ENCODE measurements at regions of chr1 and their contacts with region 1.

Region 1: DNA sequence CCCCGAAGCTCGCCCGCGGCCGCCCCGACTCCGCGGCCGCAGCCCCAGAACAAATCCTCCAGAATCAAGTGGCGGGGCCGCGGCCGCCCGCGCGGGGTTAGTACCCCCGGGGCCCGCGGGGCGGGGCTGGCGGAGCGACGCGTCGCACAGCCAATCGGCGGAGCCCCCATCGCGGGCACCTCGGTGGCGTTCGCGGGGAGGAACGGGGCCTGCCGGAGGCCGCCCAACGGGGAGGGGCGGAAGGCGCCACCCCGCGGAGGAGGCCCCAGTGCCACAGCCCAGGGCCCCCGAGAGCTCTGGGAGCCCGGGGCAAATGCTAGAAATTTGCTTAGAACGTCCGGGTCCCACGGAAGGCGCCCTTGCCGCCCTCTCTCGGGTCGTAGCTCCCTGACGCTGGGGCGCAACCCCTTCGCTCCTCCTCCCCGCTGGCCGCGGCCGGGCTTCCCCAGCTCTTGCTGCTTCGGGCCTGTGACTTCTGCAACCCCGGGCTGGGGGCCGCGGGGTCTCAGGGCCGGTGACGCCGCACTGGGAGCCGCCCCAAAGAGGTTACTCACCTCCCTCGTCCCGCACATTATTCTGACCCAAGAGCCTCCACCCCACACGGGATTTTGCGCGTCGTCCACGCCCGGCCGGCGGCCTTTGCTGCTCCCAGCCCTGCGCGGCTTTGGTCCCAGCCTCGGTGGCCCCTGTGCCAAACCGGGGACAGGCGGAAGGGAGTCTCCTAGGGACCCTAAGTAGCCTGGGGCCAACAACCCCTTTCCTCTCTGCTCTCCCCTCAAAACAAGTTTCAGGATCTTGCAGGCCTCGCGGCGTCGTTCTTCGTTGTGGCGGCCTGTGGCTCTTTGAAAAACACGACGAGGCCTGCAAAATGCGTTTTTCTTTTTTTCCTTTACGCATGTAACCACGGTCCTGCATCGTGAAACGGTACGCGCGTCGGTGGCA is at the start of gene RUNX3:
- DNase-seq: peak; percentile 51 to 90 (median 68)
- ATAC-seq: peak; percentile 32 to 68 (median 52)
- H3K4me3 ChIP-seq: peak within 1 kb of the TSS; percentile 18 to 71 (median 35)
- H3K27ac ChIP-seq: peak within 1 kb of the TSS in 3 of 12 donors; percentile 13 to 90 (median 41)
- H3K4me1 ChIP-seq: peaks cover 0 to 49% (median 14%) of the 10 kb centered on the region in 12 donors
- H3K27me3 ChIP-seq: peaks cover 80 to 98% (median 89%) of the 10 kb centered on the region in 9 donors
- CTCF ChIP-seq: peak in 2 of 12 donors; percentile 5 to 17
- POLR2A ChIP-seq: no peak
- total RNA-seq, gene RUNX3: 0.21 to 8.7 (median 0.65) TPM

Region 2: GRCh38 chr1:24996983-24997893 is 66.8 kb after region 1 on chr1:
- intact Hi-C with region 1: no loop called
- DNase-seq: peak in 2 of 5 donors; percentile 7 to 52
- ATAC-seq: no peak
- H3K4me3 ChIP-seq: no peak overlapping the region
- H3K27ac ChIP-seq: no peak overlapping the region
- H3K4me1 ChIP-seq: peaks cover 0 to 6% (median 0%) of the 10 kb centered on the region in 12 donors
- H3K27me3 ChIP-seq: peaks cover 0 to 17% (median 0%) of the 10 kb centered on the region in 9 donors
- CTCF ChIP-seq: no peak
- POLR2A ChIP-seq: no peak

Region 3: DNA sequence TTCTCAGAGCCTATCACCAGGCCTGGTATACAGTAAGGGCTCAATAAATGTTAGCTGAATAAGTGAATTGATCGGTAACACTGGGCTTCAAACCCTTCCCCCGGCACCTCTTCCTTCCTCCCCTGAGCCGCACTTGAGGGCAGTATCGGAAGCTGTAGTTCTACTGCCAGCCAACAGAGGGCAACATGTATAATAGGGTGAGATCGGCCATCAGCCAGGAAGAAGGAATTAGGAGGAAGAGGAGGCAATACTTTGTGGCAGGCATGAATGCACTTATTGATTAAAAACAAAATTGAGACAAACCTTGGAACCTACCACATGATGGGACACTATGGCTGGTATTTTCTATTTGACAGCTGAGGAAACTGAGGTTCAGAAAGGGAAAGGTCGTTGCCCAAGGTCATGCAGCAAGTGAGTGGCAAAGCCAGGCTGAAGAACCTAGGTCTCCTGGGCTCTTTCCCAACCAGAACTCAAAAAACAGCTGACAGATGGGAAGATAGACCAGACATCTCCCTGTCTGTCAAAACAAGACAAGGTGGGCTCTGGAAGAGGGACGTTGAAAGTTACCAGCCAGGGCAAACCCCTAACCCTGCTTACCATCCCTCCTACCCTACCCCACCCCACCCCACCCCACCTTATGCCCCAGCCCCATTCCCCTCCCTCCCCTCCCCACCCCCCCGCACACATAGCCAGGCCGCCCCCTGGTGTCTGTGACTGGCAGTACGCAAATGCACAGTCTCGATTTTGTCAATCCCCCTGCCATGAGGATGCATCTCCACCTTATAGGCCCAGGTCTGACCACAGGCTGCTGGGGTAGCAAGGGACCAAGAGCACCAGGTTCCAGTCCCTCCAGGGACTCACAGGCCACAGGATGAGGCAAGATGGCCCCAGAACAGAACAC is 106.9 kb after region 1 on chr1:
- intact Hi-C with region 1: loop called in 4 of 10 experiments (anchors 2 to 5 kb)
- DNase-seq: peak in 3 of 5 donors; percentile 29 to 65 (median 33)
- ATAC-seq: peak in 3 of 4 donors; percentile 29 to 42 (median 41)
- H3K4me3 ChIP-seq: no peak overlapping the region
- H3K27ac ChIP-seq: no peak overlapping the region
- H3K4me1 ChIP-seq: peaks cover 0 to 36% (median 0%) of the 10 kb centered on the region in 12 donors
- H3K27me3 ChIP-seq: peaks cover 0 to 17% (median 3%) of the 10 kb centered on the region in 9 donors
- CTCF ChIP-seq: peak in 11 of 12 donors; percentile 12 to 55 (median 32)
- POLR2A ChIP-seq: no peak

Region 4: GRCh38 chr1:25099343-25099951 is 169.0 kb after region 1 on chr1:
- intact Hi-C with region 1: loop called in 8 of 10 experiments (anchors 2 to 5 kb)
- DNase-seq: peak in 1 of 5 donors; percentile 38
- ATAC-seq: no peak
- H3K4me3 ChIP-seq: no peak overlapping the region
- H3K27ac ChIP-seq: peak overlapping the region in 1 of 12 donors; percentile 33
- H3K4me1 ChIP-seq: peaks cover 0 to 35% (median 0%) of the 10 kb centered on the region in 12 donors
- H3K27me3 ChIP-seq: peaks cover 0 to 9% (median 0%) of the 10 kb centered on the region in 9 donors
- CTCF ChIP-seq: no peak
- POLR2A ChIP-seq: no peak

Region 5: GRCh38 chr1:25198663-25199252 is 268.3 kb after region 1 on chr1:
- intact Hi-C with region 1: loop called in 8 of 10 experiments (anchors 5 to 10 kb)
- DNase-seq: peak in 3 of 5 donors; percentile 10 to 45 (median 35)
- ATAC-seq: peak; percentile 28 to 78 (median 76)
- H3K4me3 ChIP-seq: peak overlapping the region in 4 of 12 donors; percentile 10 to 29 (median 12)
- H3K27ac ChIP-seq: no peak overlapping the region
- H3K4me1 ChIP-seq: peaks cover 0 to 14% (median 3%) of the 10 kb centered on the region in 12 donors
- H3K27me3 ChIP-seq: peaks cover 0 to 17% (median 0%) of the 10 kb centered on the region in 9 donors
- CTCF ChIP-seq: peak in 3 of 12 donors; percentile 6 to 15 (median 13)
- POLR2A ChIP-seq: no peak

Measured in heart left ventricle (tissue), 16 donors.